Left cardiac atrium (tissue), 4 donors: ENCODE measurements at regions of chr3 and their contacts with region 1.

Region 1: GRCh38 chr3:66418475-66418931 is 82.3 kb downstream of the LRIG1 start:
- DNase-seq: peak; percentile 55
- ATAC-seq: peak; percentile 58 to 68

Region 2: DNA sequence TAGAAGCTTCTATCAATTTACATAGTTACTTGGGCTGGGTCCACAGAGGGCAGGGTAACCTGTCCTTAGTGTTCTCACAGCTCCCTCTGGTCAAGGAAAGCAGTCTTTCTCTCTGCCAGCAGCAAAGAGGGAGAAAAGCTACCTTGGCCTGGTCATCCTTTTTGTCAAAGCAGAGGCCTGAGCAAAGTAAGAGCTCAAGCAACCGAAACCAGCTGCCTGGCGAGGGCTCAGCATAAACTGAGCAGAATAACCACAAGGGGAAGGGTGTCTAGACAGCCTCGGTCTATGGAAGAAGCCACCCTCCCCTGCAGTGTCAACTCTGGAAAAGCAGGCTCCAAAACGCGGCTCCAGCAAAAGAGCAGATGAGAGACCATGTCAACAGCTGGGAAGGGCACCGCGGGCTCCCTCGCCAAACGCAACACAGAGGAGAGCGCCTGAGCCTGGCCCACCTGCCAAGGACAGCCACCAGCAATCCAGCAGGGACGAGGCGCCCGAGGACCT is 65.0 kb after region 1 on chr3:
- intact Hi-C with region 1: loop called in 1 of 2 experiments (anchors 5 kb)
- DNase-seq: peak; percentile 36
- ATAC-seq: peak; percentile 65 to 76